CD8-positive, alpha-beta memory T cell (primary cell): ENCODE measurements at regions of chr16 and their contacts with region 1.

Region 1: DNA sequence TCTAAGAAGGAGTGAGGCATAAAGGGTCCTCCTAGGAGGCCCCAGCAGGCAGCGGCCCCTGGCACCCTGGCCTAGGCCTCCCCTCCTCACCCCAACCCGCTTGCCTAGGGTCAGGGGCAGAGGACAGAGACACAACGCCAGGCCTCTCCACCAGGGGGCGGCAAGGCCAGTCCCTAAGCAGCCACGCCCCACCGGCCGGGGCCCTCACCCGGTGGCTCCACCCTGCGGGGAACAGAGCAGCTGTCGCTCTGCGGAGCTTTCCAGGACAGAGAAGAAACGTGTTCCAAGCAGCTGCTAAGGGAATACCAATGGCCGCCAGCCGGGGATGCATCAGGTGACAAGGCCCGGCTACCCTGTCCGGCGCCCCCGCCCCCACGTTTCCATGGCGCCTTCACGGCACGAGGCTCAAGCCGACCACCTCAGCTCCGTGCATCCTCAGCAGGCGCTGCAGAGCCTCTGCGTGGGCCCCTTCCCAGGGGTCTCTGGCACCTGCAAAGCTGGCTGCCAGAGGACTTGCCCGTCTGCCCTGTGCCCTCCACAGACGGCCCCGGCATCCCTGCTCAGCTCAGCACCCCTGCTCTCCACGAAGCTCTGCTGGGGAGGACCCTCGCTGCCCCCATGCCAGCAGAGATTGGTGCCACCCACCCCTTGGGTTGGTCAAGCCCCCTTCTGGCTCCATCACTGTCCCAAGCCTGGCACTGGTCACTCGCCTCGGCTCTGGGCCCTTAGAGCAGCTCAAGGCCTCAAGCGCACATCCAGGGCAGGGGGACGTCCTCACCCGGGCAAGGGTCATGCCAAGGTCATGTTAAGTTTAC is 5.6 kb downstream of the ZNF598 start:
- DNase-seq: peak; percentile 74 to 88 (median 79)
- H3K4me3 ChIP-seq: no peak overlapping the region
- H3K4me3 Mint-ChIP-seq: no peak overlapping the region
- H3K27ac ChIP-seq: peak overlapping the region; percentile 54
- H3K27ac Mint-ChIP-seq: peak overlapping the region in 1 of 8 donors; percentile 81
- H3K4me1 ChIP-seq: peaks cover 32% of the 10 kb centered on the region
- H3K4me1 Mint-ChIP-seq: peaks cover 20 to 54% (median 24%) of the 10 kb centered on the region in 3 donors
- H3K27me3 ChIP-seq: no peaks in the 10 kb centered on the region
- H3K27me3 Mint-ChIP-seq: no peaks in the 10 kb centered on the region

Region 2: DNA sequence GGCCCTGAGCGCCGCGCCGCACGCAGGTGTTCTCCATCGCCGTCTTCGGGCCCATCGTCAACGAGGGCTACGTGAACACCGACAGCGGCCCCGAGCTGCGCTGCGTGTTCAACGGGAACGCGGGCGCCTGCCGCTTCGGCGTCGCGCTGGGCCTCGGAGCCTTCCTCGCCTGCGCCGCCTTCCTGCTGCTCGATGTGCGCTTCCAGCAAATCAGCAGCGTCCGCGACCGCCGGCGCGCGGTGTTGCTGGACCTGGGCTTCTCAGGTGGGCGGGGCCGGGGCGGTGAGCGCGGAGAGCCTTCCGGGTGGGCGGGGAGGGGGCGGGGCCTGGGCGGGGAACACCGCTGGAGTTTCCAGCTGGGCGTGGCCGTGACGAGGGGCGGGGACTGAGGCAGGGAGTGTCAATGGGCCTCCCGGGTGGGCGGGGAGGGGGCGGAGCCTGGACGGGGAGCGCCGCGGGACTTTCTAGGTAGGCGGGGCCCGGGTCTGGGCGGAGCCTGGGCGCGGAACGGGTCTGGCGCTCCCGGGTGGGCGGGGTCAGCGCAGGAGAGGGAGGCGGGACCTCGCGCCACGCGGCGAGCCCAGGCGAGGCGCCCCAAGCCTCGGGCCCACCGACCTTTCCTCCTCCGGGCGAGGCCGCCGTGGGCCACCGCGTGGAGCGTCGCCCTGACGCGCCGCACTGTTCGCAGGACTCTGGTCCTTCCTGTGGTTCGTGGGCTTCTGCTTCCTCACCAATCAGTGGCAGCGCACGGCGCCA is 11.9 kb before region 1 on chr16:
- CTCF ChIA-PET with region 1: interaction called, 17 read pairs
- POLR2A ChIA-PET with region 1: interaction called, 4 read pairs
- DNase-seq: peak; percentile 88 to 99 (median 98)
- H3K4me3 ChIP-seq: peak overlapping the region; percentile 64
- H3K4me3 Mint-ChIP-seq: peak overlapping the region; percentile 53 to 88 (median 79)
- H3K27ac ChIP-seq: peak overlapping the region; percentile 54
- H3K27ac Mint-ChIP-seq: peak overlapping the region in 5 of 8 donors; percentile 51 to 95 (median 89)
- H3K4me1 ChIP-seq: peaks cover 16% of the 10 kb centered on the region
- H3K4me1 Mint-ChIP-seq: peaks cover 16 to 38% (median 24%) of the 10 kb centered on the region in 3 donors
- H3K27me3 ChIP-seq: peaks cover 14% of the 10 kb centered on the region
- H3K27me3 Mint-ChIP-seq: peaks cover 5 to 10% of the 10 kb centered on the region in 2 donors

Region 3: GRCh38 chr16:2016407-2016922 is 12.4 kb after region 1 on chr16:
- CTCF ChIA-PET with region 1: interaction called, 10 read pairs
- POLR2A ChIA-PET with region 1: no interaction called
- DNase-seq: no peak
- H3K4me3 ChIP-seq: no peak overlapping the region
- H3K4me3 Mint-ChIP-seq: no peak overlapping the region
- H3K27ac ChIP-seq: no peak overlapping the region
- H3K27ac Mint-ChIP-seq: peak overlapping the region in 2 of 8 donors; percentile 23 to 43
- H3K4me1 ChIP-seq: peaks cover 5% of the 10 kb centered on the region
- H3K4me1 Mint-ChIP-seq: peaks cover 0 to 5% (median 0%) of the 10 kb centered on the region in 3 donors
- H3K27me3 ChIP-seq: peaks cover 11% of the 10 kb centered on the region
- H3K27me3 Mint-ChIP-seq: peaks cover 14 to 22% of the 10 kb centered on the region in 2 donors

Region 4: GRCh38 chr16:2147981-2148671 is 144.1 kb after region 1 on chr16 and contains the start of gene RAB26:
- CTCF ChIA-PET with region 1: interaction called, 15 read pairs
- POLR2A ChIA-PET with region 1: no interaction called
- DNase-seq: peak; percentile 47 to 73 (median 57)
- H3K4me3 ChIP-seq: no peak within 1 kb of the TSS
- H3K4me3 Mint-ChIP-seq: peak within 1 kb of the TSS in 6 of 7 donors; percentile 44 to 59 (median 48)
- H3K27ac ChIP-seq: no peak within 1 kb of the TSS
- H3K27ac Mint-ChIP-seq: no peak within 1 kb of the TSS
- H3K4me1 ChIP-seq: peaks cover 43% of the 10 kb centered on the region
- H3K4me1 Mint-ChIP-seq: peaks cover 7 to 28% (median 12%) of the 10 kb centered on the region in 3 donors
- H3K27me3 ChIP-seq: no peaks in the 10 kb centered on the region
- H3K27me3 Mint-ChIP-seq: peaks cover 0 to 2% of the 10 kb centered on the region in 2 donors
- total RNA-seq, gene RAB26: 0.20 to 0.55 TPM